G401 (cell line): ENCODE measurements at regions of chr1 and their contacts with region 1.

Region 1: GRCh38 chr1:67347688-67348472 is 40.2 kb downstream of the IL12RB2 start:
- DNase-seq: peak; percentile 53

Region 2: DNA sequence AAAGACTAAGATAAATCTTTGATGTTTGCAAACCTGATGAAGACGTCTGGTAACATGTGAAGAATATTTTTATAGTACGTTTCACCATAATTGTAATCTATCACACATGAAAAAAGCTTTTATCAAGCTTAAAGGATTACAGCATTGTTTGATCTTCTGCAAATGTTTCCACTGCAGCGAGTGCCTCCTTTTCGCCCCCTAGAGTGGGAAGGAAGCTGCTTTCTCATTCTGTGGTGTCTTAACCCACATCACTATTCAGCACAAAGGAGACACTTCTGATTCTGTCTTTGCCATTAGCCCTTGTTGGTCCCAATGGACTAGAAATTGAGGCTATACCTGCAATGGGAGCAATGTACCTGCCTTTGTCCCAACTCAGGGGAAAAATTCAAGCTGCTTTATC is 86.2 kb before region 1 on chr1:
- in situ Hi-C with region 1: loop called (anchors 10 kb)
- DNase-seq: no peak

Region 3: DNA sequence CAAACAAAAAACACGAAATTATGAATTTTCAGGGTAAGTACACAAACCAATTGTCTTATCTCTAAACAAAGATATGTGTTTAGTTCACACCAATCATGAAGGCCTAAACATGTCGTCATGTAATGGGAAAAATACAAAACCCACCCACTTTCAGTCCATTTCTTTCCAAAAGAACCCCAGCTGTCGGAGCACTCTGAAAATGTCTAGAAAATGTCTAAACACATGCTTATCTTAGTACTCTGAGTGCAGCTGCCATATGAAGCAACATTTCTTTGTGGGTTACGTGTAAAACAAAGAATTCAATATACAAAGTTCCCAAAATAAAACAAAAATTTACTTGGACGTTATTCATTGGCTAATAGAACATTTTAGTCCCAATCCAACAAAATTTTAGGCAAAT is 59.6 kb after region 1 on chr1:
- in situ Hi-C with region 1: no loop called
- DNase-seq: no peak

Region 4: DNA sequence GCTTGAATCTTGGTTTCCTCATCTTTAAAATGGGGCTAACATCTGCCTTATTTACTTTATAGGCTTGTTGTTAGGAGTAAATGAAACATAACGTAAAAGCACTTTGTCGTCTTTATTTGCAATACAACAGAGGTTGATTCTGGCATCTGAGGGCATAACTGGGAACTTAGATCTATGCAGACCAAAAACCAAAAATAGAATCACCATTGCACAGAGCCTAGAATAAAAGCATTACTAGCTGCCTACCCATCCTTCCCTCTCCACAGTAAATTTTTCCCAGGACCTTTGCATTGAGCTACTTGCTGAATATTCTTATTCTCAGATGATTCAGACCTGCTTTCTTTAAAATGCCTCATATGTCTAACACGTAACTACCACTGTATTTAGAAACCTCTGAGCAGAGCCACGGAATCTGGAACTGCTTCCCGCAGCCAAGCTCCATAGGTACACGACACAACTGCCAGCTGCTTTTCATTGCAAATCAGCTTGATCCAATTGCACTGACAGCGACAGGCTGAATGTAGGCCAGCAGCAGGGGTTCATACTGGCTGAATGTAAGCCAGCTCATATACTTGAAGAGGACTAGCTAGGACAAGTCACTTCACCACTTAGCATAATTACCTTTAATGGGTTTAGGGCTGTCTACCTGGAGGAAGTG is 115.5 kb after region 1 on chr1:
- in situ Hi-C with region 1: no loop called
- DNase-seq: peak; percentile 15

Region 5: DNA sequence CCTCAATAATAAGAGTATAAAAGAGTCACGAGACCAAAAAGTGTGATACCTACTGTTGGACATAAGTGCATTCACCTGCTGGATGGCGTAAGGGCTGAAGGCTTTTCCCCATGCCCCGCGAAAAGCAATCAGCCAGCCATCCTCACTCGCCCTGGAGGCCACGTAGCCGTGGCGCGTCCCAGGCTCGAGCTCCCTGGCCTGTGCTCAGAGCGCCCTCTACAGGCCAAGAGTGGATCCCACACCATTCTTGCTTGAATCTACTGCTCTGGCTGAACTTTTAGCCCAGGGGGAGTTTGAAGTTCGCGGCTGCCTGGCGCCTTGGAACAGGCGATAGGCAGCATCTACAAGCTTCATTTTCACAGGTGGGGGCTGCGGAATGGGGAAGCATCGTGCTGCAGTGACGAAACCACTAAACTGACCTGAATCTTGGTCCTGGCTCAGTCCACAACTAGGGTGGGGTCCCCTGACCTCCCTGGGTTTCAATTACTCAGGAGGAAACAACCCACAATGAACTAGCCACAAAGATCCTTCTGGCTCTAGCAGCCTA is 152.6 kb after region 1 on chr1:
- in situ Hi-C with region 1: loop called (anchors 25 kb)
- DNase-seq: peak; percentile 63